ENCODE measurements at regions of chr17 and their contacts with region 1.

Region 1: DNA sequence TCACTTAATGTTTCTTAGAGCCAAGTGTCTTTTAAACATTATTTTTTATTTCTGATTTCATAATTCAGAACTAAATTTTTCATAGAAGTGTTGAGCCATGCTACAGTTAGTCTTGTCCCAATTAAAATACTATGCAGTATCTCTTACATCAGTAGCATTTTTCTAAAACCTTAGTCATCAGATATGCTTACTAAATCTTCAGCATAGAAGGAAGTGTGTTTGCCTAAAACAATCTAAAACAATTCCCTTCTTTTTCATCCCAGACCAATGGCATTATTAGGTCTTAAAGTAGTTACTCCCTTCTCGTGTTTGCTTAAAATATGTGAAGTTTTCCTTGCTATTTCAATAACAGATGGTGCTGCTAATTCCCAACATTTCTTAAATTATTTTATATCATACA is 13.6 kb upstream of the BCAS3 start:
- DNase-seq: no peak
- H3K27ac ChIP-seq: no peak overlapping the region
- CTCF ChIP-seq: no peak

Region 2: GRCh38 chr17:60554351-60554788 is 109.7 kb before region 1 on chr17:
- CTCF ChIA-PET with region 1: interaction called, 10 read pairs
- POLR2A ChIA-PET with region 1: no interaction called
- DNase-seq: no peak
- H3K27ac ChIP-seq: no peak overlapping the region
- CTCF ChIP-seq: no peak

Region 3: DNA sequence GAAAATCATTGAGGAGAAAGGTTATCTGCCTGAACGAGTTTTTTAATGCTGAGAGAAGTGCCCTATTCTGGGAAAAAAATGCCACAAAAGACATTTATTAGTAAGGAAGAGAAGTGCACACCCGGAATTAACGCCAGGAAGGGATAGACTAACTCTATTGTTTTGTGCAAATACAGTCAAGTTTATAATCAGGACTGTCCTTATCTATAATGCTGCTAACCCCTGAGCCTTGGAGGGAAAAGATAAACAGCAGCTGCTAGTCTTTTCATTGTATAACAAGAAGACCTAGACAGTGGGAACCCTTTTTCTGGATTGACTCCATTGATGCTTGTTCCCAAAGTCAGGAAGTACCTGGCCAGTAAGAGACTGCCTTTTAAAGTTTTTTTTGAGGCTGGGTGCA is 40.1 kb after region 1 on chr17:
- CTCF ChIA-PET with region 1: no interaction called
- POLR2A ChIA-PET with region 1: no interaction called
- DNase-seq: no peak
- H3K27ac ChIP-seq: no peak overlapping the region
- CTCF ChIP-seq: no peak

Region 4: GRCh38 chr17:60729854-60730253 is 65.8 kb after region 1 on chr17:
- CTCF ChIA-PET with region 1: no interaction called
- POLR2A ChIA-PET with region 1: no interaction called
- DNase-seq: no peak
- H3K27ac ChIP-seq: no peak overlapping the region
- CTCF ChIP-seq: no peak

Measured in RWPE1 (cell line).